ENCODE measurements at regions of chr3 and their contacts with region 1.

Region 1: DNA sequence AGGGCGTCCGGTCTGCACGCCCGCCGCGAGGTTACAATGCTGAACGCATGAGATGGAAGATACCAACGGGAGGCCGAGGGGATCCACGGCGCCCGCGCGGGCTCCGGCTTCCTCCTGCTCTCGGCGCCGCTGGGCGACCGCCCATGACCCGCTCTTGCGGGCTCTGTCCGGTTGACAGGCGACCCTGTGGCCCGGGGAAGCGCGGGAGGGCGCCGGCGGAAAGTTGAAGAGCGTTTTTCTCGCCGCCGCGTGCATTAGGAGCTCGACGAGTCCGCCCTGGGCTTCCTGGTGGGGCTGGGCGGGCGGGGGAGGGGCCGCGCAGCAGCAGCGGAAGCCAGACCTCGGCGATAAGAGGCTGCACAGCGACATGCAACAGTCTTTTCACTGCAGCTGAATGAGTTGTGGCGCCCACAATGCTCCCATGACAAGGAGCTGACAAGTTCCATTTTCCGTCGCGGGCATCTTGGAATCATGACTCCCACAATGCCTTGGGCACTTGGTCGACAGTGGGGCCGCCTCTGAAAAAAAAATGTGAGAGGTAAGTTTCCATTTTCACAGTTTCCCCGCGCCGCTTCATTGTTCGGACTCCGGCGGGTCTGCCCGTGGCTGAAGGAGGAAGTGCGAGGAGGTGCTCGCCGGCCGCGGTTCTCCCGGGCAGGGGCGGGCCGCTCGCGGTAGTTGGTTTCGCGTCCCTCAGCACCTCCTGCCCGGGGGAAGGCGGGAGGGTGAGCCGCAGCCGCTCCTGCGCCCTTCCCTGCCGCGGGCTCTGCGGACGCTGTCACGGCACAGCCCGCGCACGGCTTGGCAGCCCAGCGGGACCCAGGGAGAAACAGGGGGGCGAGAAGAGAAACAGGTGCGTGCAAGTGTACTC is at the start of gene MBNL1:
- DNase-seq: no peak
- H3K4me3 ChIP-seq: peak within 1 kb of the TSS; percentile 76
- CTCF ChIP-seq: no peak

Region 2: GRCh38 chr3:152121292-152121654 is 147.5 kb before region 1 on chr3:
- CTCF ChIA-PET with region 1: no interaction called
- POLR2A ChIA-PET with region 1: interaction called, 18 read pairs
- DNase-seq: peak; percentile 86
- H3K4me3 ChIP-seq: no peak overlapping the region
- CTCF ChIP-seq: no peak

Region 3: DNA sequence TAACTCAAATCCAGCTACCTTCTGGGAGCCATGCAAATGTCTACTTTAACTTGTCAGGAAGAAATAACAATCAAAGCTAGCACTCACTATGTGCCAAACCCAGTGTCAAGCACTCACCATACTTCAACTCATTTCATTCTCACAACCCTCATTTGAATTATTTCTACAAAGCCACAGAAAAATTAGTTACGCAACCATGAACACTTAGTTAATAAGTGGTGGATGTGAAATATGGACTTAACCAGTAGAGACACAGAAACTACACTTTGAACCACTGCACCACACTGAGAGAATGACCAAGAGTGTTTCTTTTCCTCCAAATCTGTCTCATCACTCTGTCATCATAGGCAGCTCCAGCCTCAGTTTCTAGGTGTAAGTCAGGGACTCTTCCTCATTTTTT is 91.0 kb before region 1 on chr3:
- CTCF ChIA-PET with region 1: interaction called, 4 read pairs
- POLR2A ChIA-PET with region 1: interaction called, 22 read pairs
- DNase-seq: no peak
- H3K4me3 ChIP-seq: no peak overlapping the region
- CTCF ChIP-seq: no peak